HepG2 (cell line): ENCODE measurements at regions of chr6 and their contacts with region 1.

Region 1: DNA sequence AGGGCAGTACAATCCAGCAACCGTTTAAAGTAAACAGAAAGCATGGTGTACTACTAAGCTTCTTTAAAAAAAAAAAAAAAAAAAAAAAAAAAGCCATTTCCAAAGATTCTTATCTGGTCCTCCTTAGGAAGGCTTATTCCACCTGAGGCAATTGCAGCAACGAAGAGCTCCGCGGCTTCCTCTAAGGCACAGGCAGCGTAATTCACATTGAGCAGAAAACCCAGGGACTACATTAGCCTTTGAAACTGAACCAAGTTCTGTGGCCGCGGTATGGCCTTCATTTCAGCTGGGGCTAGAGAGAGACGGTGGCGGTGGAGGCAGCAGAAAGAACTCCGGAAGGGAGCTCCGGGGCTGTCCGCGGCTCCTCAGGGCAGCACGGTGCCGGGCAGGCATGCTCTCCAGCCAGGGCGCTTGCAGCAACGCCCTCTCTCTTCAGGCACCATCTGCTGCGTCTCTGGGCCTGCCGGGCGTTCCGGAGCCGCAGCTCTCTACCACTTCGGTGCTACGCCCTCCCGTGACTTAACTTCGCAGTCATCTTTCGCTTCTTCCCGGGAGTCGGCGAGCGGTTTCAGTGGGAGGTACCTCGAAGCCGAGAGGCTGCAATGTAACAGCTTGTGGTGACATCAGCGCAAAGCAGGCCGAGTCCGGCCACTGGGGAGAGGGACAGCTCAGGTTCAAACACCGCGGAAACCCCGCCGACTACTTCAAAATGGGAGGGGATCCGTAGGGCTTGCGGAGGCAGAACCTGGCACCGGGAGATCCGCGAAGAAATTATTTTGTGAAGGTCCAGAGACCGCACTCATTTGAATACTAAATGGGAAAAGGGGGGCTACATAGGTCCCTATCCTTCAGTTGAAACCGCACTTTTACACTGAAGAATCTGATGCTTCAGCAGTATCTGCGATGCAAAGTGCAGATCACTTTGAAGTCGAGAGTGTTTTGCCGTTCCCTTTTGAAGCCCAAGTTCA is 100.0 kb downstream of the DST start:
- DNase-seq: peak; percentile 98
- ATAC-seq: peak; percentile 96
- H3K4me3 ChIP-seq: peak overlapping the region; percentile 59 to 81 (median 76)
- H3K27ac ChIP-seq: peak overlapping the region; percentile 92
- H3K4me1 ChIP-seq: peaks cover 49% of the 10 kb centered on the region
- H3K27me3 ChIP-seq: no peaks in the 10 kb centered on the region; a peak in 1 of 5 replicates
- CTCF ChIP-seq: peak; percentile 85
- EP300 ChIP-seq: peak; percentile 17 to 38; a peak in 1 of 4 replicates
- POLR2A ChIP-seq: peak; percentile 82 to 96
- RAD21 ChIP-seq: peak; percentile 82

Region 2: DNA sequence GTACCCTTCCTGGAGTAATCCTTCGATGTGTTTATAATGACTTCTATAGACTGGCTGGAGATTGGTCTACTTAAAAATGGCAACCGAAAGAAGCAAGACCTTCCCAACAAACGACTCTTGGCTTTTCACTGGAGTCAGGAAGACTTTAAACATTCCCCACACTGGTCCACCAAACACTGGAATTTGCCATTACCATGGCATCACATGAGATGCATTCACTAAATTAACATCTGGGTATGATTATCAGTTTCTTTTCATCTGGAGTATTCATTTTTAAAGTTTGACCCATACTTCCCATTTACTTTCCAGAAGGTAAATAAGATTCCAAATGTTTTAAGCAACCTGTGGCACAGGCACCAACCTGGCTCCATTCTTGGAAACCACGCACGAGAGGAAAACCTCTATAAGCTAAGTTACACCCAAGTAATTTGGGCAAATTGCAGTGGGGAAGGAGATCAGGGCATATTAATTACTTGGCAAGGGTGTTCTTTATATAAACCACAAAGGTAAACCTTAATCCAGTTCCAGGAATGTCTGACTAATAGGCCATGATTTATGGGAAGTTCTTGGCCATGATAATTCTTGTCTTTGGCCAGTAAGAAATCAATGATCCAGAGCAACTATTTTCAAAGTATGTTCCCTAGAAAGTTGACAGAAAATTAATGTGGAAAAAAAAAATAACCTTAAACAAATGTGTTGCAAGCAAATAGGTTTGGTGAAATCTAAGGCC is 105.3 kb before region 1 on chr6:
- CTCF ChIA-PET with region 1: no interaction called
- POLR2A ChIA-PET with region 1: no interaction called
- in situ Hi-C with region 1: no loop called
- intact Hi-C with region 1: no loop called
- DNase-seq: no peak
- ATAC-seq: no peak
- H3K4me3 ChIP-seq: no peak overlapping the region
- H3K27ac ChIP-seq: no peak overlapping the region
- H3K4me1 ChIP-seq: peaks cover 8% of the 10 kb centered on the region; the same call in 1 of the 2 replicates
- H3K27me3 ChIP-seq: no peaks in the 10 kb centered on the region
- CTCF ChIP-seq: no peak
- EP300 ChIP-seq: no peak
- POLR2A ChIP-seq: no peak
- RAD21 ChIP-seq: no peak

Region 3: GRCh38 chr6:56484669-56485068 is 58.0 kb before region 1 on chr6:
- CTCF ChIA-PET with region 1: no interaction called
- POLR2A ChIA-PET with region 1: interaction called, 4 read pairs
- in situ Hi-C with region 1: no loop called
- intact Hi-C with region 1: loop called (anchors 1 kb)
- DNase-seq: no peak
- ATAC-seq: no peak
- H3K4me3 ChIP-seq: no peak overlapping the region
- H3K27ac ChIP-seq: no peak overlapping the region
- H3K4me1 ChIP-seq: peaks cover 16% of the 10 kb centered on the region
- H3K27me3 ChIP-seq: no peaks in the 10 kb centered on the region
- CTCF ChIP-seq: no peak
- EP300 ChIP-seq: no peak
- POLR2A ChIP-seq: no peak
- RAD21 ChIP-seq: no peak

Region 4: GRCh38 chr6:56521454-56521853 is 21.2 kb before region 1 on chr6:
- CTCF ChIA-PET with region 1: no interaction called
- POLR2A ChIA-PET with region 1: interaction called, 27 read pairs
- in situ Hi-C with region 1: no loop called
- intact Hi-C with region 1: loop called (anchors 2 kb)
- DNase-seq: peak; percentile 83
- ATAC-seq: peak; percentile 77
- H3K4me3 ChIP-seq: no peak overlapping the region
- H3K27ac ChIP-seq: peak overlapping the region; percentile 34
- H3K4me1 ChIP-seq: peaks cover 40% of the 10 kb centered on the region
- H3K27me3 ChIP-seq: no peaks in the 10 kb centered on the region
- CTCF ChIP-seq: no peak
- EP300 ChIP-seq: peak in 1 of 2 experiments; percentile 80; a peak in 2 of 4 replicates
- POLR2A ChIP-seq: no peak
- RAD21 ChIP-seq: no peak

Region 5: GRCh38 chr6:56595490-56596122 is 53.0 kb after region 1 on chr6:
- CTCF ChIA-PET with region 1: no interaction called
- POLR2A ChIA-PET with region 1: no interaction called
- in situ Hi-C with region 1: no loop called
- intact Hi-C with region 1: loop called (anchors 5 kb)
- DNase-seq: peak; percentile 43
- ATAC-seq: peak; percentile 89
- H3K4me3 ChIP-seq: no peak overlapping the region
- H3K27ac ChIP-seq: no peak overlapping the region
- H3K4me1 ChIP-seq: no peaks in the 10 kb centered on the region
- H3K27me3 ChIP-seq: no peaks in the 10 kb centered on the region
- CTCF ChIP-seq: peak; percentile 74
- EP300 ChIP-seq: no peak
- POLR2A ChIP-seq: no peak
- RAD21 ChIP-seq: no peak

Region 6: DNA sequence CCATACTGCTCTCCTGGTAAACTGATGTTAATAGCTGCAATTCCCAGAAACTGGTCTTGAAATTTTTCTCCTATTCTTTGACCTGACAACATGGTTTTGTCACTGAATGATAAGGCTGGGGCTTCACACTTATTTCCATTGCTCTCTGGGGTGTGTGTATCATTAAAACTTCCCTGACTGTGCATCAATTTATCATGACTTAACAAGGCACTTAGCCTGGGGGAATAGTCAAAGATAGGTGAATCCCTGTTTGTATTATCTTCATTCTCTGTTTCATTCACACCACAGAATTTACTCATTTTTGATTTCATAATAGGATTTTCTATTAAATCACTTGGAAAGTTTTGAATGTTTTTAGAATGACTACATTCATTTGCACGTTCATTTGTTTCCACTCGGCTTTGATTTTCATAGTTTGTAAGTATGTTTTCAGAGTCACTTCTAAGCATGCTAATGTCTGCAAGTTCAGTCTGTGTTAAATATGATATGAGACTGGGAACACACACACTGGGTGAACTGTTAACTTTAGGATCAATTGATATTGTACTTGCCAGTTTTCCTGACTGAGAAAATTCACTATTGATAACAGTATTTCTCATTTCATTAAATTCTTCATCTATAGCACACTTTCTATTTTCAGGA is 64.6 kb after region 1 on chr6:
- CTCF ChIA-PET with region 1: no interaction called
- POLR2A ChIA-PET with region 1: no interaction called
- in situ Hi-C with region 1: no loop called
- intact Hi-C with region 1: no loop called
- DNase-seq: no peak
- ATAC-seq: no peak
- H3K4me3 ChIP-seq: no peak overlapping the region
- H3K27ac ChIP-seq: no peak overlapping the region
- H3K4me1 ChIP-seq: no peaks in the 10 kb centered on the region
- H3K27me3 ChIP-seq: no peaks in the 10 kb centered on the region
- CTCF ChIP-seq: no peak
- EP300 ChIP-seq: no peak
- POLR2A ChIP-seq: no peak
- RAD21 ChIP-seq: no peak